ENCODE measurements at regions of chr7 and their contacts with region 1.

Region 1: DNA sequence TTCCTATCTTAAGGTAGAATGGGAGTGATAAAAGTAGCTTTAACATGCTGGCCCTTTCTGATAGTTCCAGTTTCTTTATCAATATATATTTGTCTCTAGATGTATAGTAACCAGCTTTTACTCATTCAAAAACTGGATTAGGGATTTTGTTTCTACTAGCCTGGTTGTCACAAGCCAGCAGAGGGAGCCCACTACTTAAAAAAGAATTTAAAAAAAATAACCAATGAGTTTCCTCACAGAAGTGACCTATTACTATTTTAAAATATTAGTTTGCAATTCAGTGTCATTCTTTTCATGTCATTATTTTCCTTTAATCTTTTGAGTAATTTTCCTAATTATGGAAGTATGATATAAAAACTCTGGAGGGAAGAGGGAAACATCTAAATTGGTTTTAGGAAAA is 142.1 kb downstream of the PHTF2 start:
- DNase-seq: peak; percentile 48
- ATAC-seq: peak; percentile 75; the same call in 1 of the 2 replicates
- H3K4me3 ChIP-seq: no peak overlapping the region
- H3K27ac ChIP-seq: no peak overlapping the region
- H3K4me1 ChIP-seq: no peaks in the 10 kb centered on the region
- H3K27me3 ChIP-seq: no peaks in the 10 kb centered on the region
- CTCF ChIP-seq: peak; percentile 75
- POLR2A ChIP-seq: no peak
- RAD21 ChIP-seq: peak; percentile 65

Region 2: DNA sequence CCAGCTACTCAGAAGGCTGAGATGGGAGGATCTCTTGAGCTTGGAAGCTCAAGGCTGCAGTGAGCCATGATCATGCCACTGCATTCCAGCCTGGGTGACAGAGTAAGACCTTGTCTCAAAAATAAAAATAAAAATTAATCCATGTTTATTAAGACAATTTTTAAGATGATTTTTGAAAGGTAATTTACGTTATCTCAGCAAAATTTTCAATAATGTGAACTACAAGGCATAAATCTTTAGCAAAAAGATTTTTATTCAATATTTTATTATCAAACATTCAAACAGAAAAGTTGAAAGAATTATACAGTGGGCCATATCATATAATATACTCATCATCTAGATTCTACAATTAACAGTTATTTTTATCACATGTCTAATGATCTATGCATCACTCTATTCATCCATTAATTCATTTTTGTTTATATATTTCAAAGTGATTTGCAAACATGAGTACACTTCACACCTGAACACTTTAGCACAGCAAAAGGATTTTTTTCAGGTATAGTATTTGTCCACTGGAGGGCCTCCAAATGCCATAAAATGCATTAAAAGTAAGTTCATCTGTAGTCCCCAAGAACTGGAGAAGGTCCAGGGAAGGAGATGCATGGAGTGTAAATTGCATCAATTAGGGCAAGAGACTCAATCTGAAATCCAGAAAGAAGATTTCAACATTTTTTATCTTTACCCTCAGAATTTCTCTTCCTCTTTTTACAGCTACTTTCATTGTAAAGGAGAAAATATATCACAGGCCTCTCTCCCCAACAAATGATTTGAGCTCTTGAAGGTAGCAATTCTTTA is 283.0 kb before region 1 on chr7:
- CTCF ChIA-PET with region 1: no interaction called
- POLR2A ChIA-PET with region 1: no interaction called
- dilution Hi-C with region 1: no loop called
- in situ Hi-C with region 1: loop called (anchors 25 kb)
- intact Hi-C with region 1: loop called (anchors 5 kb)
- DNase-seq: peak; percentile 43
- ATAC-seq: peak; percentile 71
- H3K4me3 ChIP-seq: no peak overlapping the region
- H3K27ac ChIP-seq: no peak overlapping the region
- H3K4me1 ChIP-seq: peaks cover 1% of the 10 kb centered on the region; the same call in 1 of the 2 replicates
- H3K27me3 ChIP-seq: no peaks in the 10 kb centered on the region
- CTCF ChIP-seq: peak; percentile 60
- POLR2A ChIP-seq: no peak
- RAD21 ChIP-seq: peak; percentile 67

Region 3: GRCh38 chr7:77798394-77799077 is 142.1 kb before region 1 on chr7 and contains the starts of genes PHTF2 and TMEM60:
- CTCF ChIA-PET with region 1: no interaction called
- POLR2A ChIA-PET with region 1: interaction called, 3 read pairs
- dilution Hi-C with region 1: no loop called
- in situ Hi-C with region 1: no loop called
- intact Hi-C with region 1: loop called (anchors 2 kb)
- DNase-seq: peak; percentile 100
- ATAC-seq: peak; percentile 93
- H3K4me3 ChIP-seq: peak within 1 kb of the TSS; percentile 81
- H3K27ac ChIP-seq: peak within 1 kb of the TSS; percentile 90
- H3K4me1 ChIP-seq: peaks cover 6% of the 10 kb centered on the region; the same call in 1 of the 2 replicates
- H3K27me3 ChIP-seq: no peaks in the 10 kb centered on the region
- CTCF ChIP-seq: peak; percentile 53
- POLR2A ChIP-seq: peak; percentile 48
- RAD21 ChIP-seq: peak; percentile 52
- total RNA-seq, gene PHTF2: 65.5 and 69.9 TPM in 2 replicates
- total RNA-seq, gene TMEM60: 9.9 and 19.2 TPM in 2 replicates

Region 4: DNA sequence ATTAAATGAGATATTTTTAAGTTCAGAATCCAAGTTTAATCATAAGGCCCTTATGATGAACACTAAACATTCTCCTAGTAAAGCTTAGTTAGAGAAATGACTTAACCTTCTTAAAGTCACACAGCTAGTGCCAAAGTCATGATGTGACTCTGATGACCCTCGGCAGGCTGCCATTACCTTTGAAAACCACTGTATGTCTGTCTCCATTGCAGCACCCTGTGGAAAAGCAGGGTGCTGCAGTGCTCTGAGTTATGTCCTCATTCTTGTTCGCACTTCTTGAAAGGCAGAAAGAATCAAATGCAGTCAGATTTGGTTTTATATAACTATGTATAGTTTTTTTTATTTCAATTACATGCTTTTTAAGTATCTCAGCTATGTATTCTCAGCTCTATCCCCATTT is 37.0 kb before region 1 on chr7:
- CTCF ChIA-PET with region 1: no interaction called
- POLR2A ChIA-PET with region 1: no interaction called
- dilution Hi-C with region 1: no loop called
- in situ Hi-C with region 1: no loop called
- intact Hi-C with region 1: no loop called
- DNase-seq: peak; percentile 2
- ATAC-seq: peak; percentile 25
- H3K4me3 ChIP-seq: no peak overlapping the region
- H3K27ac ChIP-seq: no peak overlapping the region
- H3K4me1 ChIP-seq: no peaks in the 10 kb centered on the region; the same call in 1 of the 2 replicates
- H3K27me3 ChIP-seq: no peaks in the 10 kb centered on the region
- CTCF ChIP-seq: peak; percentile 19; the same call in 1 of the 2 replicates
- POLR2A ChIP-seq: no peak
- RAD21 ChIP-seq: peak; percentile 11; the same call in 1 of the 2 replicates

Region 5: DNA sequence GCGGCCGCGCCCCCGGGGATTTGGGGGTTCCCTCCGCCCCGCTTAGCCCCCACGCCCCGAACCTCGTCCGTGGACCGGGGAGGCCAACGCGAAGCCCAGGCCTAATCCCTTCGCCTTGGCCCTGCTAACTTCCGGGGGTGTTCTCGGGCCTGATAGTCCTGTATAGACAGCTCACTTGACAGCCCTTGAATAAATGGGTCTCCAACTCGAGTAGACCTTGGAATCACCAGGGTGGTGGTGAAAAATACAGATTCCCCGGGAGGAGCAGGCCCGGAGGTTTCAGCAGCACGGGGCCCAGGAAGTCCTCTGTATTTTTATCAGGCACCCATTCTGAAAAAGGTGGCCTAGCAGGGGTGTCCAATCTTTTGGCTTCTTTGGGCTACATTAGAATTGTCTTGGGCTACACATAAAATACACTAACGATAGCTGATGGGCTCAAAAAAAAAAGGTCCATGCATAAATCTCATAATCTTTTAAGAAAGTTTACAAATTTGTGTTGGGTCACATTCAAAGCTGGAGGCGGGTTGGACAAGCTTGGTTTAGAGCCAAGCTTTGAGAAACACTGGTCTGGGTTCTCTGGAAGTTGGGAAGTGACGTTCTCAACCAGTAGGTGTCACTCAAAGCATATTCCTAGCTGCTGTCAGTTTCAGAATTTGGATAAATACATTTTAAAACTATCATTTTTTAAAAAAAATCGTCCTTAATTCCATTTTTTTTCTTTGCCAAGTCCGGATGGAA is 79.7 kb after region 1 on chr7:
- CTCF ChIA-PET with region 1: no interaction called
- POLR2A ChIA-PET with region 1: no interaction called
- dilution Hi-C with region 1: no loop called
- in situ Hi-C with region 1: no loop called
- intact Hi-C with region 1: loop called (anchors 2 kb)
- DNase-seq: peak; percentile 91
- ATAC-seq: peak; percentile 50
- H3K4me3 ChIP-seq: no peak overlapping the region
- H3K27ac ChIP-seq: peak overlapping the region; percentile 92
- H3K4me1 ChIP-seq: peaks cover 5% of the 10 kb centered on the region
- H3K27me3 ChIP-seq: no peaks in the 10 kb centered on the region
- CTCF ChIP-seq: peak; percentile 86
- POLR2A ChIP-seq: no peak
- RAD21 ChIP-seq: peak; percentile 83

Region 6: DNA sequence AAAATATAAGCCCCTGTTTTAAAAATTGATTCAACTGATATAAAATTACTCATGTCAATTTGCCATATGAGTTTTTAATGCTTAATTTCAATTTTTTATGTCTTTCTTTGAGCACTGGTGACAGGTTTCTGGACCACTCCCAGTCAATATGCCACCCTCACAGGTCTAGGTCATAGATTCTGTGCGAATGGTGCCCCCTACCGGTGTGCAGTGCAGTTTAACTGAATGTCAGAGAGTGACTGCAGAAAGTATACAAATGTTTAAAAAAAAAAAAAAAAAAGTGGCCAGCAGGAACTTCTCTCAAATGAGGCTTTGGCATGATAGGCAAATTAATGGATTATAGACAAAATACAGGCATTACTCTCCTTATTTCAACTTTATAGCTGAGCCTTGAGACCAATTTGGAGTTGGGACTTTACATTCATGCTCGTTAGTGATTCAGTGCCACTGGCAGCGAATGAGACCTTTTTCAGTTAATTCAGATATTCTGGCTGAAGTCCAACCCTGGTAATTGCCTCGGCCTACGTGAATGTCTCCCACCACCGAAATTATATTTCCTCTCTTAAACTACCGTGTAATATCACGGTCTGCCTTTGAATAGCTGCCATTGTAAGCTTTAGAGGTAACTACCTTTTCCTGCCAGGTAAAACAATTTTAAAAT is 285.5 kb after region 1 on chr7:
- CTCF ChIA-PET with region 1: no interaction called
- POLR2A ChIA-PET with region 1: no interaction called
- dilution Hi-C with region 1: no loop called
- in situ Hi-C with region 1: no loop called
- intact Hi-C with region 1: loop called (anchors 10 kb)
- DNase-seq: peak; percentile 45
- ATAC-seq: peak; percentile 33; the same call in 1 of the 2 replicates
- H3K4me3 ChIP-seq: no peak overlapping the region
- H3K27ac ChIP-seq: peak overlapping the region; percentile 59; the same call in 1 of the 2 replicates
- H3K4me1 ChIP-seq: peaks cover 14% of the 10 kb centered on the region
- H3K27me3 ChIP-seq: no peaks in the 10 kb centered on the region
- CTCF ChIP-seq: peak; percentile 52
- POLR2A ChIP-seq: no peak
- RAD21 ChIP-seq: peak; percentile 47

Region 7: DNA sequence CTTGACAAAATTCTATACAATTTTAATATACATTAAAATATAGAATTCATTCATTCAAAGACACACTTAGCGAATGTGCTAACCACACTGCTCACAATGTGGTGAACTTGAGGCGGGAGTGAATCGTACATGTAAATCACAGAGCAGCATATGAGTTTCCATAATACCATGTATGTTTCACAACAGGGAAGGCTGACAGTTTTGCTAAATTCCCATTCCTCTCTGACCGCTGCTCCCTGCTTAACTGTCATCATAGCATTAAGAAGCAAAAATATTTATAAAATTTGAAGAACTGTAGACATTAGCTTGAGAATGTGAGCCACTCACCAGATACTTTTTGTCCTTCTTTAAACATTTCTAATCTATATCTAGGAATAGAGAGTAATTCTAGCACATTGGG is 749.5 kb after region 1 on chr7:
- CTCF ChIA-PET with region 1: no interaction called
- POLR2A ChIA-PET with region 1: no interaction called
- dilution Hi-C with region 1: no loop called
- in situ Hi-C with region 1: no loop called
- intact Hi-C with region 1: no loop called
- DNase-seq: peak; percentile 69
- ATAC-seq: peak; percentile 90
- H3K4me3 ChIP-seq: no peak overlapping the region
- H3K27ac ChIP-seq: no peak overlapping the region
- H3K4me1 ChIP-seq: no peaks in the 10 kb centered on the region; the same call in 1 of the 2 replicates
- H3K27me3 ChIP-seq: no peaks in the 10 kb centered on the region
- CTCF ChIP-seq: no peak
- POLR2A ChIP-seq: no peak
- RAD21 ChIP-seq: no peak

Region 8: GRCh38 chr7:78924581-78924980 is 983.9 kb after region 1 on chr7:
- CTCF ChIA-PET with region 1: no interaction called
- POLR2A ChIA-PET with region 1: no interaction called
- dilution Hi-C with region 1: no loop called
- in situ Hi-C with region 1: no loop called
- intact Hi-C with region 1: loop called (anchors 2 kb)
- DNase-seq: peak; percentile 43
- ATAC-seq: no peak
- H3K4me3 ChIP-seq: no peak overlapping the region
- H3K27ac ChIP-seq: no peak overlapping the region
- H3K4me1 ChIP-seq: no peaks in the 10 kb centered on the region
- H3K27me3 ChIP-seq: no peaks in the 10 kb centered on the region
- CTCF ChIP-seq: peak; percentile 45
- POLR2A ChIP-seq: no peak
- RAD21 ChIP-seq: peak; percentile 59

Region 9: DNA sequence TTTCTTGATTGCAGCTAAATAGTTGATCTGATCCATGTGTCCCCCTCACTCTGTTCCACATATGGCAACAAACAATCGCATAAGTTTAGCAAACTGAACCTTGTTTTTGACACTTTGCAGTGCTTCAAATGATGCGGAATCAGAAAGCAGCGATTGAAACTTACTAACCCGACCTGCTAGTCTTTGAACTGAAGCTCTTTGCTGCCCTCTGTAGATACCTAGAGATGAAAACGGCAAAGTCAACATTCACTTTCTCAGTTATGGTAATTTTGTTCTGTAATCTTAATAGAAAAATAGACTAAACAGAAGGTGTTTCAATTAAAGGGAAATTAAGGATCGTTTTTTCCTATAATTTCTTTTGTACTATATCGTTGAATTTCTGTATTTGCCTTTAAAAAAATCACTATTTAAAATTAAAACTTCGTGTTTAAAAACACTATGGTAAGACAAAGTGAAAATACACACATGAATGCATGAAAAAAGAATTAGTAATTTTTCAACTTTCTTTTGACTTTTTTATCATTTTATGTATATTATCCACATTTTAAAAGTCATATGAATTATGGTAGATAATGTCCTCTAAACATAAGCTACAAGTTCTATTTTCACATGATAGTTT is 1236.3 kb after region 1 on chr7:
- CTCF ChIA-PET with region 1: no interaction called
- POLR2A ChIA-PET with region 1: no interaction called
- dilution Hi-C with region 1: no loop called
- in situ Hi-C with region 1: no loop called
- intact Hi-C with region 1: loop called (anchors 10 kb)
- DNase-seq: peak; percentile 68
- ATAC-seq: peak; percentile 80
- H3K4me3 ChIP-seq: no peak overlapping the region
- H3K27ac ChIP-seq: no peak overlapping the region
- H3K4me1 ChIP-seq: no peaks in the 10 kb centered on the region; the same call in 1 of the 2 replicates
- H3K27me3 ChIP-seq: no peaks in the 10 kb centered on the region
- CTCF ChIP-seq: peak; percentile 70
- POLR2A ChIP-seq: no peak
- RAD21 ChIP-seq: peak; percentile 81